HepG2 (cell line): ENCODE measurements at regions of chr17 and their contacts with region 1.

Region 1: DNA sequence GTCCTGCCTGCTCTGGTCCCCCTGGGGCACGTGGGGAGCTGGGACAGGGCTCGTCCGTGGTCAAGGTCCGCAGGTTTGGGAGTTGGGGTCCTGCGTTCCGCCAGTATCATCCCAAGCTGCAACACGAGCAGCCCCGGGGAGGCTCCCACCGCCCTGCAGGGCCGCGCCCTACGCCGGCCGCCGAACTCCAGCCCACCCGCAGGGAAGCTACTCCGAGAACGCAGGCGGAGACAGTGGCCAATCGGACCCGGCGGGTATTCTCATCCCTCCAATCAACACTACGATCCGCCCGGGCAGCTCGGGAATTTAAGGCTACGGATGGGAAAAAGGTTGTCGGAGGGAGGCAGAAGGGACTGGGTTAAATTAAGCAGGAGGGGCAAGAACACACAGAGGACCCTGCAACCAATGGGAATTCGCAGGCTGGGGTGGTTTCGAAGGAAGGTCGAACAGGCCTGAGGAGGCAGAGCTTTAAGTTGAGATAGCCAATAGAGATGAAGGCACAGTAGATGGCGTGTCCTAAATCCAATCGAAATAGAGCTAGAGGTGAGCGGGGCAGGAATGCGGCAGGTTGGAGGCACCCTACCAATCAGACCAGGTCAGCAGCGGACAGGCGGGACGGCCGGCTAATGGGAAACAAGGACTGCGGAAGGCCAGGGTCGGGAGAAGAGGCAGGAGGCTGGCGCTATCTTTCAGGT is 626 bp downstream of the SPAG7 start:
- DNase-seq: peak; percentile 99
- ATAC-seq: peak; percentile 91
- H3K4me3 ChIP-seq: peak overlapping the region; percentile 72 to 88 (median 77)
- H3K27ac ChIP-seq: peak overlapping the region; percentile 92
- H3K4me1 ChIP-seq: peaks cover 31% of the 10 kb centered on the region
- H3K27me3 ChIP-seq: no peaks in the 10 kb centered on the region; a peak in 1 of 5 replicates
- CTCF ChIP-seq: no peak
- EP300 ChIP-seq: no peak
- POLR2A ChIP-seq: no peak; a peak in 1 of 4 replicates
- RAD21 ChIP-seq: no peak

Region 2: GRCh38 chr17:4635823-4636375 is 331.1 kb before region 1 on chr17:
- CTCF ChIA-PET with region 1: no interaction called
- POLR2A ChIA-PET with region 1: no interaction called
- in situ Hi-C with region 1: no loop called
- intact Hi-C with region 1: no loop called
- DNase-seq: no peak
- ATAC-seq: no peak
- H3K4me3 ChIP-seq: no peak overlapping the region
- H3K27ac ChIP-seq: no peak overlapping the region
- H3K4me1 ChIP-seq: no peaks in the 10 kb centered on the region
- H3K27me3 ChIP-seq: peaks cover 10 to 35% of the 10 kb centered on the region in 2 experiments; a peak in 4 of 5 replicates
- CTCF ChIP-seq: no peak
- EP300 ChIP-seq: no peak
- POLR2A ChIP-seq: no peak
- RAD21 ChIP-seq: no peak

Region 3: DNA sequence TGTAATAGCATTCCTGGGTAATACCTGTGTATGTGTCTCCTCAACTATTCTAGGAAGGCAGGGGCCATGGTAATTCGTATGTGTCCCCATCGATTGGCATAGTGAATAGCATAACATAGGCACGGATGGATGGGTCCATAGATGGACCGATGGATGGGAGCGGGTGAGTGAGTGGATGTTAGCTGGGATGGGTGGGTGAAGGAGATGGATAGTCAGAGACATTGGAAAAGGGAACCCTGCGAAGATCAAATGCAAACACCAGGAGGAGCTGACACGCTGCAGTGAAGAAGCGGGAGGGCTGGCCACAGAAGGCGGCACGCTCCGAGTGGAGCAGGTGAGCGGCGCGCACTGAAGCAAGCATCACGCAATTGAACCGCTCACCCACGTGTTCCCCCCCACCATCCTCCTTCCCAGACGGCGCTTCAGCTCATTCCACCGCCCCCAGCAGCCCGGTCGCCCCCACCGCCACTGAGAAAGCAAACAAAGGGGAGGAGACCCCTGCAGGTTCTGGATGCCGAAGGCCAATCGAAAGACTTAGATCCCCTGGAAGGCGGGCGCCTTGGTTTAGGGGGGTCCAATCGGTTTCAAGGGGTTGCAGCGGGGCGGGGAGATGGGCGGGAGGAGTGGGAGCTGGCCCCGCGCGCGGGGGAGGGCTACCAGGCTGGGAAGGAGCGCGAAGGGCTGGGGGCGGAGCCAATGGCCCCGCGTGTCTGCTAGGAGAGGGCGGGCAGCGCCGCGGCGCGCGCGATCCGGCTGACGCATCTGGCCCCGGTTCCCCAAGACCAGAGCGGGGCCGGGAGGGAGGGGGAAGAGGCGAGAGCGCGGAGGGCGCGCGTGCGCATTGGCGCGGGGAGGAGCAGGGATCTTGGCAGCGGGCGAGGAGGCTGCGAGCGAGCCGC is 256.9 kb before region 1 on chr17 and contains the start of gene ARRB2:
- CTCF ChIA-PET with region 1: no interaction called
- POLR2A ChIA-PET with region 1: interaction called, 15 read pairs
- in situ Hi-C with region 1: no loop called
- intact Hi-C with region 1: loop called (anchors 10 kb)
- DNase-seq: peak; percentile 97
- ATAC-seq: peak; percentile 80
- H3K4me3 ChIP-seq: peak within 1 kb of the TSS; percentile 72 to 86 (median 85)
- H3K27ac ChIP-seq: peak within 1 kb of the TSS; percentile 65
- H3K4me1 ChIP-seq: peaks cover 43% of the 10 kb centered on the region
- H3K27me3 ChIP-seq: no peaks in the 10 kb centered on the region
- CTCF ChIP-seq: peak; percentile 85
- EP300 ChIP-seq: 0 out of 4 replicates have a peak, but pooled peaks of 1 of the 2 experiments have one; percentile 13
- POLR2A ChIP-seq: peak in 1 of 2 experiments; percentile 58; a peak in 3 of 4 replicates
- RAD21 ChIP-seq: peak; percentile 92
- total RNA-seq, gene ARRB2: 15.5 and 21.5 TPM in 2 replicates

Region 4: GRCh38 chr17:4908301-4908700 is 58.7 kb before region 1 on chr17:
- CTCF ChIA-PET with region 1: interaction called, 3 read pairs
- POLR2A ChIA-PET with region 1: interaction called, 103 read pairs
- in situ Hi-C with region 1: no loop called
- intact Hi-C with region 1: loop called (anchors 5 kb)
- DNase-seq: peak; percentile 77
- ATAC-seq: peak; percentile 85
- H3K4me3 ChIP-seq: peak overlapping the region; percentile 44 to 71 (median 45)
- H3K27ac ChIP-seq: peak overlapping the region; percentile 43
- H3K4me1 ChIP-seq: peaks cover 71% of the 10 kb centered on the region
- H3K27me3 ChIP-seq: no peaks in the 10 kb centered on the region
- CTCF ChIP-seq: peak; percentile 16; the same call in 1 of the 2 replicates
- EP300 ChIP-seq: peak in 1 of 2 experiments; percentile 5; a peak in 1 of 4 replicates
- POLR2A ChIP-seq: peak; percentile 39 to 76; a peak in 3 of 4 replicates
- RAD21 ChIP-seq: 0 out of 2 replicates have a peak, but pooled peaks have one; percentile 6

Region 5: GRCh38 chr17:4934173-4934979 is 32.6 kb before region 1 on chr17:
- CTCF ChIA-PET with region 1: no interaction called
- POLR2A ChIA-PET with region 1: interaction called, 201 read pairs
- in situ Hi-C with region 1: no loop called
- intact Hi-C with region 1: no loop called
- DNase-seq: peak; percentile 46
- ATAC-seq: peak; percentile 91
- H3K4me3 ChIP-seq: peak overlapping the region in 2 of 3 experiments; percentile 31 to 46; a peak in 2 of 6 replicates
- H3K27ac ChIP-seq: no peak overlapping the region
- H3K4me1 ChIP-seq: peaks cover 22% of the 10 kb centered on the region
- H3K27me3 ChIP-seq: no peaks in the 10 kb centered on the region
- CTCF ChIP-seq: peak; percentile 79
- EP300 ChIP-seq: no peak
- POLR2A ChIP-seq: peak in 1 of 2 experiments; percentile 64; a peak in 2 of 4 replicates
- RAD21 ChIP-seq: peak; percentile 62; the same call in 1 of the 2 replicates

Region 6: GRCh38 chr17:4948931-4949320 is 18.1 kb before region 1 on chr17:
- CTCF ChIA-PET with region 1: no interaction called
- POLR2A ChIA-PET with region 1: interaction called, 273 read pairs
- in situ Hi-C with region 1: no loop called
- intact Hi-C with region 1: loop called (anchors 1 kb)
- DNase-seq: peak; percentile 82
- ATAC-seq: peak; percentile 62
- H3K4me3 ChIP-seq: peak overlapping the region; percentile 70 to 100 (median 93)
- H3K27ac ChIP-seq: peak overlapping the region; percentile 99
- H3K4me1 ChIP-seq: peaks cover 59% of the 10 kb centered on the region
- H3K27me3 ChIP-seq: no peaks in the 10 kb centered on the region; a peak in 1 of 5 replicates
- CTCF ChIP-seq: no peak
- EP300 ChIP-seq: no peak
- POLR2A ChIP-seq: peak; percentile 50 to 64; a peak in 3 of 4 replicates
- RAD21 ChIP-seq: peak; percentile 30

Region 7: DNA sequence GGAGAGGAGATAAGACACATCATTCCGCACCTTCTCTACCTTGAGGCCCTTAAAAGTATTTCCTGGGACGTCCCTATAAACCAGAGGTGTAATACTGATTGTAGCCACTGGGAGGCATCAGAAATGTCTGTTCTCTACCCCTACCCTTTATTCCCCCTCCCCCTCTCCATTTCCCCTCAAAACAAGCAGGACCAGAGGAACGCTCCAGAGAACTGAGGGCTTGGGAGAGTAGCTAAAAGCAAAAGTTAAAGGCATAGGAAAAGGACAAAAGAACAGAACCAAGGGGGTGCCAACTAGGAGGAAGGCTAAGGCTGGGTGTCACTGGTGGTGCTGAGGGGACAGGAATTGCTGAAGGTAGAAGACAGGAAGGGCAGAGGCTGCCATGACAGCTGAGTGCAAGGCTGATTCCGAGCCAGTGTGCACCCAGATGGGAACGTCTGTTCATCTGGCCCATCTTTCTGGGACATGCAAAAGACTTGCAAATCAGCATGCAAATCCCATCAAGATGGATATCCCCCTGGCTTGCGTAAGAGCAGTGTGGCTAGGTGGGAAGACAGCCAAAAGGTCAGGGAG is 13.7 kb after region 1 on chr17:
- CTCF ChIA-PET with region 1: no interaction called
- POLR2A ChIA-PET with region 1: interaction called, 78 read pairs
- in situ Hi-C with region 1: no loop called
- intact Hi-C with region 1: no loop called
- DNase-seq: peak; percentile 54
- ATAC-seq: peak; percentile 63
- H3K4me3 ChIP-seq: no peak overlapping the region
- H3K27ac ChIP-seq: no peak overlapping the region
- H3K4me1 ChIP-seq: peaks cover 14% of the 10 kb centered on the region
- H3K27me3 ChIP-seq: no peaks in the 10 kb centered on the region
- CTCF ChIP-seq: peak; percentile 75
- EP300 ChIP-seq: no peak
- POLR2A ChIP-seq: no peak
- RAD21 ChIP-seq: no peak

Region 8: DNA sequence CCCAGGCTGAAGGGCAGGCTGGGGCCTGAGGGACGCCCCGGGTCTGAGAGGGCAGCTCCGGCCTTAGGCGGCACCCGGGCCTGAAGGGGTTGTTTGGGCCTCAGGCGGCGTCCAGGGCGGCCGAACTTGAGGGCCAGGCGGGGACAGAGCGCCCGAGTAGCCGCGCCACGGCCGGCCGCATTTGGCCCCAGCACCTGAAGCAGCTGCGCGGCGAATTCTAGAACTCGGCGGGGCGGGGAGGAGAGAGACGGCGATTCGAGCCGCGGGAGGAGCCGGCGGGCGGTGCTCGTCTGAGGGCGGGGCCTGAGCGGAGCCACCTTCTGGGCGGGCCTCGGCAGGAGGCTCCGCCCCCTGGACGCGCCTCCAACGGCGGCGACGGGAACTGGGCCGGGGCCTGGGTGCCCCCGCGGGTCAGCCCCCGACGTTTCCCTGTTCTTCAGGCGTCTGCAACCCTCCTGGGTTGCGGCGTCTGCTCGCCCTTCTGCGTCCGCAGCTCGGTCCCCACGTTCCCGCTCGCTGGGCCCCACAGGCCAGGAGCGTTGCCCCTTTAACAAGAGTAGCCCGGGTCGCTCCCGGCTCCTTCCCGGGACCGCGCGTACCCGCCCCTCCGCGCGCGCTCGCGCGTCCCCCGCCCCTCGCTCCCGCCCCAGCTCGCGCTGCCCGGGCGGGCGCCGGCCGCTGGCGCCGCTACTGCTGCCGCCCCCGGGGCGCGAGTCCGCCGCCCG is 30.5 kb after region 1 on chr17 and contains the starts of genes INCA1 and KIF1C:
- CTCF ChIA-PET with region 1: no interaction called
- POLR2A ChIA-PET with region 1: interaction called, 48 read pairs
- in situ Hi-C with region 1: no loop called
- intact Hi-C with region 1: no loop called
- DNase-seq: peak; percentile 77
- ATAC-seq: peak; percentile 78
- H3K4me3 ChIP-seq: peak within 1 kb of the TSS; percentile 91 to 93 (median 92)
- H3K27ac ChIP-seq: peak within 1 kb of the TSS; percentile 93
- H3K4me1 ChIP-seq: peaks cover 28% of the 10 kb centered on the region
- H3K27me3 ChIP-seq: no peaks in the 10 kb centered on the region; a peak in 1 of 5 replicates
- CTCF ChIP-seq: no peak
- EP300 ChIP-seq: no peak
- POLR2A ChIP-seq: peak; percentile 62 to 79
- RAD21 ChIP-seq: peak; percentile 23; the same call in 1 of the 2 replicates
- total RNA-seq, gene INCA1: 0.35 and 0.93 TPM in 2 replicates
- total RNA-seq, gene KIF1C: 79.0 and 104 TPM in 2 replicates

Region 9: DNA sequence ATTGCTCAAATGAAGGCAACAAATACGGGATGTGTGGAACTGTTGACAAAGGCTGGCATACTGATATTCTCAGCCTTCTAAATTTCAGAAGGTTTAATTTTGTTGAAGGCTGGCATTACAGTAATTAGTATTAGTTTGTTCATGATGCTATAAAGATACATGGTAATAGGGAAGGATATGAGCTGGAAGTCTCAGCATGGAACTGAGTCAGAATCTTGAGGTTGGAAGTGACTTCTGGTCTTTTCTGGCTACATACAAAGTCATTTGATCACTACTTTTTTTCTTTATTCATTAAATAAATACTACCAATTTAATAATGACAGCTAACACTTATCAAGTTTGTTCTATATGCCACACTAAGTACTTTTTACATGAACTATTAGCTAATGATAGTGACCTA is 337.6 kb after region 1 on chr17:
- CTCF ChIA-PET with region 1: no interaction called
- POLR2A ChIA-PET with region 1: no interaction called
- in situ Hi-C with region 1: no loop called
- intact Hi-C with region 1: no loop called
- DNase-seq: no peak
- ATAC-seq: no peak
- H3K4me3 ChIP-seq: no peak overlapping the region
- H3K27ac ChIP-seq: no peak overlapping the region
- H3K4me1 ChIP-seq: no peaks in the 10 kb centered on the region
- H3K27me3 ChIP-seq: no peaks in the 10 kb centered on the region
- CTCF ChIP-seq: no peak
- EP300 ChIP-seq: no peak
- POLR2A ChIP-seq: no peak
- RAD21 ChIP-seq: no peak